ENCODE measurements at regions of chr9 and their contacts with region 1.

Region 1: DNA sequence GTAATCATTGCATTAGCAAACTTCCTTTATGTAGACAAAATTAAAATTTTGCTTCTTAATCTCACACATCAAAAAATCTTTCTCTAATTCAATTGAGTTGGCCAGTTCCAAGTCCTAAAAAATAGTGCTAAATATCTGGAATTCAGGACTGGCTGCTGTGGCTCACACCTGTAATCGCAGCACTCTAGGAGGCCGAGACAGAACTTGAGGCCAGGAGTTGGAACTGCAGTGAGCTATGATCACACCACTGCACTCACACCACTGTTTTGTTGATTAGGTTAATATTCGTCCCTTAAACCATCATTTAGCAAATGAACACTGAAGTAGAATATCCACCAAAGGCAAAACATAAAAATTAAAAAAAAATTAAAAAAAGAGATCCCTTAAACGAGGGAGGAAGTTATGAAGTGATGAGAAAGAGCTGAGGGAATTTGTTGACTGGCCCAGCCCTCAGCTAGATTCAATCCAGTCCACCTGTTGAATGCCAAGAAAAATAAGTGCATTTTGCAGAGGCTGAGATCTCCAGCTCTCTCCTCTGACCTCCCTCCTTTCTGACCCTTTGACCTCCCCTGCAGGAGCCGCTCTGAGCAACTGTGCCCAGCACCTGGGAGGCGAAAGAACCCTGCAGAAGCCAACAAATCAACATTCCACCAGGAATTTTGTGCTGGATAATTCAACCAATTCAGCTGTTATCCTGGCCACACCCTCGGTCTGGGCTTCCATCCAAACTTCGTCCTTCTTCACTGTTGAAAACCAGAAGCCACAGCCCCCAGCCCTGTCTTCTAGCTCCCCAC is 96.8 kb downstream of the OR2K2 start:
- DNase-seq: no peak
- H3K4me3 ChIP-seq: no peak overlapping the region
- H3K27ac ChIP-seq: no peak overlapping the region
- H3K4me1 ChIP-seq: no peaks in the 10 kb centered on the region
- CTCF ChIP-seq: no peak

Region 2: GRCh38 chr9:109453210-109453842 is 1779.9 kb before region 1 on chr9:
- CTCF ChIA-PET with region 1: no interaction called
- POLR2A ChIA-PET with region 1: no interaction called
- intact Hi-C with region 1: loop called (anchors 10 kb)
- DNase-seq: no peak
- H3K4me3 ChIP-seq: no peak overlapping the region
- H3K27ac ChIP-seq: no peak overlapping the region
- H3K4me1 ChIP-seq: no peaks in the 10 kb centered on the region
- CTCF ChIP-seq: no peak

Region 3: GRCh38 chr9:110986529-110986928 is 246.7 kb before region 1 on chr9:
- CTCF ChIA-PET with region 1: no interaction called
- POLR2A ChIA-PET with region 1: no interaction called
- intact Hi-C with region 1: no loop called
- DNase-seq: no peak
- H3K4me3 ChIP-seq: no peak overlapping the region
- H3K27ac ChIP-seq: no peak overlapping the region
- H3K4me1 ChIP-seq: no peaks in the 10 kb centered on the region
- CTCF ChIP-seq: no peak

Measured in OCI-LY7 (cell line).